A673 (cell line): ENCODE measurements at regions of chr2 and their contacts with region 1.

Region 1: GRCh38 chr2:64586883-64587481 is 62.9 kb downstream of the AFTPH start:
- DNase-seq: peak; percentile 68
- H3K4me3 ChIP-seq: no peak overlapping the region
- H3K27ac ChIP-seq: no peak overlapping the region
- H3K4me1 ChIP-seq: no peaks in the 10 kb centered on the region
- H3K27me3 ChIP-seq: no peaks in the 10 kb centered on the region
- CTCF ChIP-seq: peak; percentile 74

Region 2: DNA sequence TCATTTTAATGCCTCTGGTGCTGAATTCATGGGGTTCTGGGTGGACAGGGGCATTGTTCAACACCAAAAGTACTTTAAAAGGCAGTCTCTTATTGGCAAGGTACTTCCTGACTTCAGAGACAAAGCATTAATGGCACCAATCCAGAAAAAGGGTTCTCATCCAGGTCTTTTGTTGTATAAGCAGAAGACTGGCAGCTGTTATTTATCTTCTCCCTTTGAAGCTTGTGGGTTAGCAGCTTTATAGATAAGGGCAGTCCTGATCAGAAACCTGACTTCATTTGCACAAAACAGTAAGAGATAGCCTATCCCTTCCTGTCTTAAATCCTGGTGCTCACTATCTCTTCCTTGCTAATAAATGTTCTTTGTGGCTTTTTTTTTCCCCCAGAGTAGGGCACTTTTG is 636.6 kb before region 1 on chr2:
- CTCF ChIA-PET with region 1: no interaction called
- POLR2A ChIA-PET with region 1: no interaction called
- intact Hi-C with region 1: no loop called
- DNase-seq: no peak
- H3K4me3 ChIP-seq: no peak overlapping the region
- H3K27ac ChIP-seq: no peak overlapping the region
- H3K4me1 ChIP-seq: no peaks in the 10 kb centered on the region
- H3K27me3 ChIP-seq: no peaks in the 10 kb centered on the region
- CTCF ChIP-seq: no peak

Region 3: DNA sequence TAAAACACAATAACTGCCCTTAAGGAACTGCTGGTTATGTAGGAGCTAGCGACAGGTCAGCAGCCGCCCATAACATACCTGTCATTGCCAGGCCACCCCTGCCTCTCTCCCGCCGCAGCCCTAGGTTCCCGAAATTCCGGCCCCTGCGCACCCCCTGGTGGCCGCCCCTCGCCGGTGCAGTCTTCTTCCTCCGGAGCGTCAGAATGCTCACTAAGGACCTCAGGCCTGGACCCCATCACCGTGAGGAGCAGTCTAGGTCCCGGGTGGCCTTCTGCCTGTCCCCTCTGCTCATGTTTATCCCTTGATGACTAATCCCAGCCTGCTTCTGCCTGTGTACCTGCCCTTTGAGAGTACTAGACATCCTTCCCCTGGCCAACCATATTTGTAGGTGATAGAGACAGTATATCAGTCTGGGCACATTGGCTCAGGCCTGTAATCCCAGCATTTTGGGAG is 286.5 kb after region 1 on chr2:
- CTCF ChIA-PET with region 1: no interaction called
- POLR2A ChIA-PET with region 1: no interaction called
- intact Hi-C with region 1: loop called (anchors 2 kb)
- DNase-seq: peak; percentile 72
- H3K4me3 ChIP-seq: no peak overlapping the region
- H3K27ac ChIP-seq: no peak overlapping the region
- H3K4me1 ChIP-seq: peaks cover 7% of the 10 kb centered on the region
- H3K27me3 ChIP-seq: no peaks in the 10 kb centered on the region
- CTCF ChIP-seq: peak; percentile 97

Region 4: DNA sequence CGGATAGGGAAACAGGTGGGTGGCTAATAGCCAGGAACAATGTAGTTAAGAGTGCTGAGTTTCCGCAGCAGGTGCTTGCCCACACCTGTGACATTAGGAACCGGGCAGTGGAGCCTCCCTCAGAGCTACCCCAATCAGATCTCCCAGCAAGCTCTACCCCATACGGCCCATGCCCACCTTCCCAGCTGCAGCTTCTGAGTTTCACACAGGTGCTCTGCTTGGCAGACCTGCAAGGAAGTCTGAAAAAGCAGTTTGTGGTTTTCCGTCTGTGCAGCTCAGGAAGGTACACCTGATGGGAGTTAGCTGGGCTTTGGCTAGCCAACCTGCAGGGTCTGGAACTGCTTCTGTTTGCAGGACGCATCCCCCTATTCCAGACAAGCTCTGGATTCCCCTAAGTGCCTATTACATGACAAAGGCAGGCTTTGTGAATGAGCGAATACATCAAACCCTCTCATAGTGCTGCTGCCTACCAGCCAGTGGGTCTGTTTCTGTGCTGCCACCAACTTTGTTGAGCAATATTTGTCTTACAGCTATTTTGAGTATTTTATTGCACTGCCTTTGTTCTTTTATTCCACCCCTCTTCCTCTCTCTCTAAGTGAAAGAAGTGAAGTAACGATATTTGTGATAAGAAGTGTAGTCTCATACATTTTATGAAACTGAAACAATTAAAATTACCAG is 444.5 kb after region 1 on chr2:
- CTCF ChIA-PET with region 1: no interaction called
- POLR2A ChIA-PET with region 1: no interaction called
- intact Hi-C with region 1: loop called (anchors 5 kb)
- DNase-seq: peak; percentile 61
- H3K4me3 ChIP-seq: no peak overlapping the region
- H3K27ac ChIP-seq: no peak overlapping the region
- H3K4me1 ChIP-seq: peaks cover 26% of the 10 kb centered on the region
- H3K27me3 ChIP-seq: no peaks in the 10 kb centered on the region
- CTCF ChIP-seq: no peak

Region 5: DNA sequence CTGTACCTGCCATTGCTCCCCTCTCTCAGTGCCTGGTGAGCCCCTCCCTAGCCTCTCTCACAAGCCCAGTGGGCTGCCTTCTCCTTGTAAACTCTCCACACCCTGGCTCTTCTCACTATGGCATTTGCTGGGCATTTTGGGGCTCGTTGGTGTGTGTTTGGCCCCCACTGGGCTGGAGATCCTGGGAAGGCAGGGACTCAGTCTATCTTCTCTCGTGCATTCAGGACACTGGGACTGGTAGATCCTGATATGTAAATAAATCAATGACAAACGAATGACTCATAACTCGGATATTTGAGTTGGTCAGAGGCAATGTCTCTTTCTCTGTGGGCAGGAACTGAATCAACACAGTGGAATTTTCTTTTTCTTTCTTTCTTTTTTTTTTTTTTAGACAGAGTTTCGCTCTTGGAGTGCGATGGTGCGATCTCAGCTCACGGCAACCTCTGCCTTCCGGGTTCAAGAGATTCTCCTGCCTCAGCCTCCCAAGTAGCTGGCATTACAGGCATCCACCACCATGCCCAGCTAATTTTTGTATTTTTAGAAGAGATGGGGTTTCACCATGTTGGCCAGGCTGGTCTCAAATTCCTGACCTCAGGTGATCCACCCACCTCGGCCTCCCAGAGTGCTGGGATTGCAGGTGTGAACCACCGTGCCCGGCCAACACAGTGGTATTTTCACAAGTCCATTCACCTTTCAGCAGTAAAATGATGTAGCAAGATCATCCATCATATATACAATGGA is 990.0 kb after region 1 on chr2:
- CTCF ChIA-PET with region 1: no interaction called
- POLR2A ChIA-PET with region 1: no interaction called
- intact Hi-C with region 1: loop called (anchors 10 kb)
- DNase-seq: peak; percentile 86
- H3K4me3 ChIP-seq: no peak overlapping the region
- H3K27ac ChIP-seq: peak overlapping the region; percentile 39
- H3K4me1 ChIP-seq: peaks cover 16% of the 10 kb centered on the region
- H3K27me3 ChIP-seq: no peaks in the 10 kb centered on the region
- CTCF ChIP-seq: no peak